ENCODE measurements at regions of chr20 and their contacts with region 1.

Region 1: GRCh38 chr20:58246346-58246745 is 17.9 kb upstream of the ANKRD60 start:
- DNase-seq: no peak
- H3K4me3 ChIP-seq: no peak overlapping the region
- H3K27ac ChIP-seq: no peak overlapping the region
- H3K4me1 ChIP-seq: no peaks in the 10 kb centered on the region
- H3K27me3 ChIP-seq: no peaks in the 10 kb centered on the region
- CTCF ChIP-seq: no peak
- POLR2A ChIP-seq: no peak

Region 2: DNA sequence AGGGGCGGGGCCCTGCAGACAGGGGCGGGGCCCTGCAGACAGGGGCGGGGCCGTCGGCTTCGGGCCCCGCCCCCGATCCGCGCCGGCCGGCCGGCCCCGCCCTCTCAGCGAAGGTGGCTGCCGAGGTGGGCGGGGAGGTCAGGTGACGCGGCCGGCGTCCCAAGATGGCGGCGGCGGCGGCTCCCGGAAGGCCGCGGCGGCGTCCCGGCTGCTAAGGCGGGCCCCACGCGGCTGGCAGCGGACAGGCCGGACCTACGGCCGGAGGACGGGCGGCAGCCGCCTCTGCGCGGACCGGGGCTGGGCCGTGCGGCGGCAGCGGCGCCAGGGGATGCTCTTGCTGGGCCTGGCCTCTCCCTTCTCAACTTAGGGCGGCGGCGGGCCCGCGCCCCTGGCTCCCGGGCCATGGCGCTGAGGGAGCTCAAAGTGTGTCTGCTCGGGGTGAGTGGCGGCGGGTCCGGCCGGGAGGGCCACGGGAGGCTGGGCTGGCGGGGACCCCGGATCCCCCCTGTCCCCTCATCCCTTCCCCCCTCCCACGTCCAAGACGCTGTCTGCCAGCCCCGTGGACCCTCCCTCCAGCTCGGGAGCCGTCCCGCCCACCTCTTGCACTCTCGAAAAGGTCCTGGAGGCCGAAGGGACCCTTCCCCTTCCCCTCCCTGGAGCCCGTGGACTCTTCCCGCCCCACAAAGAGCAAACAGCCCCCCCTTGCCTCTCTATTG is 63.4 kb after region 1 on chr20 and contains the start of gene RAB22A:
- intact Hi-C with region 1: loop called (anchors 10 kb)
- DNase-seq: no peak
- H3K4me3 ChIP-seq: peak within 1 kb of the TSS; percentile 89 to 98
- H3K27ac ChIP-seq: peak within 1 kb of the TSS; percentile 87
- H3K4me1 ChIP-seq: peaks cover 40% of the 10 kb centered on the region
- H3K27me3 ChIP-seq: no peaks in the 10 kb centered on the region
- CTCF ChIP-seq: no peak
- POLR2A ChIP-seq: peak in 1 of 2 donors; percentile 91
- total RNA-seq, gene RAB22A: 15.2 TPM

Measured in vagina (tissue), 2 donors.